ENCODE measurements at regions of chr3 and their contacts with region 1.

Region 1: DNA sequence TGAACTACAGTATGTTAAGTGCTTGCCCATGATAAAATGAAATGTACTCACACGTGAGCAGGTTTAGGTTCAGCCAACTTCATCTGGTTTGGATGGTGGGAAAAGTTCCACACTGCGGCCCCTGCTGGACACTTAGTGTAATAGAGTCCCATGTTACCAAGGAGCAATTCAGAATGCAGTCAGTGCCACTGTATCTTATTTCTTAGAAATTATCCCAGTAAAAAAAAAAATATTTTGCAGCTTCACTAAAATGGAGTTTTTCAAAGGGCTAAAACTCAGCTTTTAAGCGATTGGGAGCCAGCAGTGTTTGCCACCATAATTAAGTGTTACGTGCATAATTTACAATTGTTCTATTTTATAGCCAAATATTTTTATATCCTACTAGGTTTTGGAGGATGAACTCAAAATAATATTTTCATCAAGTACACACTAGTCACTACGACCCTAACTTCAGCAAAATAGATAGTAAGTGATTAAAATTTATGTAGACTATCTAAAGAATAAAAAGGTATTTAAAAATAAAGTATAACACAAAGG is 371.7 kb upstream of the GBE1 start:
- DNase-seq: peak; percentile 24
- H3K4me3 ChIP-seq: no peak overlapping the region
- H3K27ac ChIP-seq: no peak overlapping the region
- H3K27me3 ChIP-seq: no peaks in the 10 kb centered on the region
- CTCF ChIP-seq: peak; percentile 89

Region 2: DNA sequence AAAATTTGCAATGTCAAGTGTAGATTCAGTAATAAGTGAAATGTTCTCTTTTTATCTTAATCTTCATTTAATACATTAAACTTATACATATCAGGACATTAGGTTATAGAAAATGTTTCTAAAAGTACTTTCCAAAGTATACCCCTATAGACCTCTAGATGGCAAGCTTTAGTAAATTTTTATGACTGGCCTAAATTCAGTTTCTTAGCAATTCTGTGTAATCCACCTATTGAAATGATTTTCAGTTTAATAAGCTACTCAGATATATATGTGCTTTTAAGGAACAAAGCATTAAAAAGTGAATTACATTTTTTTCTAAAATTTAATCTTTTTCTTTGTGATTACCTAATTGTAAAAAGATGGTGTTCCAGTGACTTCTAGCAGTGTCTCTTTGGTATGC is 713.9 kb before region 1 on chr3:
- CTCF ChIA-PET with region 1: interaction called, 42 read pairs
- POLR2A ChIA-PET with region 1: no interaction called
- DNase-seq: no peak
- H3K4me3 ChIP-seq: no peak overlapping the region
- H3K27ac ChIP-seq: no peak overlapping the region
- H3K27me3 ChIP-seq: no peaks in the 10 kb centered on the region
- CTCF ChIP-seq: peak; percentile 60

Region 3: GRCh38 chr3:81581966-81582599 is 551.1 kb before region 1 on chr3:
- CTCF ChIA-PET with region 1: interaction called, 11 read pairs
- POLR2A ChIA-PET with region 1: no interaction called
- DNase-seq: peak; percentile 13
- H3K4me3 ChIP-seq: no peak overlapping the region
- H3K27ac ChIP-seq: no peak overlapping the region
- H3K27me3 ChIP-seq: no peaks in the 10 kb centered on the region
- CTCF ChIP-seq: peak; percentile 86

Region 4: GRCh38 chr3:81666493-81667121 is 466.5 kb before region 1 on chr3:
- CTCF ChIA-PET with region 1: interaction called, 11 read pairs
- POLR2A ChIA-PET with region 1: no interaction called
- DNase-seq: no peak
- H3K4me3 ChIP-seq: no peak overlapping the region
- H3K27ac ChIP-seq: no peak overlapping the region
- H3K27me3 ChIP-seq: no peaks in the 10 kb centered on the region
- CTCF ChIP-seq: peak; percentile 90

Measured in AG04450 (cell line).